ENCODE measurements at regions of chr6 and their contacts with region 1.

Region 1: GRCh38 chr6:22471132-22471690 is 98.2 kb upstream of the HDGFL1 start:
- DNase-seq: no peak
- ATAC-seq: peak; percentile 63
- H3K4me3 ChIP-seq: no peak overlapping the region
- H3K27ac ChIP-seq: peak overlapping the region; percentile 24
- H3K4me1 ChIP-seq: peaks cover 13% of the 10 kb centered on the region
- H3K27me3 ChIP-seq: no peaks in the 10 kb centered on the region
- CTCF ChIP-seq: no peak; a peak in 1 of 6 replicates
- EP300 ChIP-seq: no peak
- POLR2A ChIP-seq: no peak
- RAD21 ChIP-seq: peak; percentile 19; the same call in 1 of the 2 replicates

Region 2: DNA sequence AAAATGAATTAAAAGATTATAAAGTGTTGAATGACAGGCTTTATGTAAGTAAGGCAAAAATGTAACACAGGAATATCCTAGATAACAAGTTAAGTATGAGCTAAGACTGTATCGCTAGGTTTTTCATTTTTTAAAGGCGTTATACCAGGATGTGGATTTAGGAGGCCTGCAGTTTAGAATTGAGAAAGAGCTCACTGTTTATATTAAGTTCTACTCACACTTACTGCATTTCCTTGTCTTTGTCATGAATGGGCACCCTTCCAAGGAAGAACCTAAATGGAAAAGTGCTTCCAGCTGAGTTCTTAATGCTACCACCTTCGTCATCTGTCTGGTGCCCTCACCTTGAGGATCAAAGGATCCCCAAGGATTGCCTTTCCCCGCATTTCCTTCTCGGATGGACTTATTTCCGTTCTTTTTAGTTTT is 729.0 kb before region 1 on chr6:
- CTCF ChIA-PET with region 1: no interaction called
- POLR2A ChIA-PET with region 1: no interaction called
- RAD21 ChIA-PET with region 1: no interaction called
- SMC1A ChIA-PET with region 1: no interaction called
- in situ Hi-C with region 1: no loop called
- intact Hi-C with region 1: no loop called
- DNase-seq: no peak
- ATAC-seq: no peak
- H3K4me3 ChIP-seq: no peak overlapping the region
- H3K27ac ChIP-seq: no peak overlapping the region
- H3K4me1 ChIP-seq: no peaks in the 10 kb centered on the region
- H3K27me3 ChIP-seq: no peaks in the 10 kb centered on the region
- CTCF ChIP-seq: no peak
- EP300 ChIP-seq: no peak
- POLR2A ChIP-seq: no peak
- RAD21 ChIP-seq: no peak

Region 3: GRCh38 chr6:22302838-22303237 is 168.4 kb before region 1 on chr6:
- CTCF ChIA-PET with region 1: no interaction called
- POLR2A ChIA-PET with region 1: no interaction called
- RAD21 ChIA-PET with region 1: no interaction called
- SMC1A ChIA-PET with region 1: no interaction called
- in situ Hi-C with region 1: no loop called
- intact Hi-C with region 1: no loop called
- DNase-seq: no peak
- ATAC-seq: peak; percentile 55
- H3K4me3 ChIP-seq: no peak overlapping the region
- H3K27ac ChIP-seq: no peak overlapping the region
- H3K4me1 ChIP-seq: no peaks in the 10 kb centered on the region
- H3K27me3 ChIP-seq: no peaks in the 10 kb centered on the region
- CTCF ChIP-seq: no peak
- EP300 ChIP-seq: no peak
- POLR2A ChIP-seq: no peak
- RAD21 ChIP-seq: no peak

Region 4: DNA sequence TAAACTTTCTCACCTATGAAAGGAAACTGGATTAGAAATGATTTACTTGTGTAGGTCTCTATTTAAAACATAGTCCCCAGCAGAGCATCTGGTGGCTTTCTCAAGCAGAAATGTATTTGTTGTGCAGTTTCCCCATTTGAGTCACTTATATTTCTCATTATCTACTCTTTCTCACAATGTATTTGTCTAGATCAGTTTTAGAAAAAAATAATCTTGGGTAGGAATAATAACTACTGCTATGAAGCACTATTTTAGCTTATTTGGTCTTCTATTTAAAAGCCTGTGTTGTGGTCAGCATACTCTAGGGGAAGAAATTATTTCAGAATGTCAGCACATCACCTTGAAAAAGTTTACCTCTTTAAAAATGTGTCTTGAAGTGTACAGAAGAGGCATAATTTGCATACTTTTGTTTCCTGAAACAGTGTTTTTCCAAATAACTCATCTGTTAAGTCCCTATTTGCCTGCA is 113.5 kb before region 1 on chr6:
- CTCF ChIA-PET with region 1: no interaction called
- POLR2A ChIA-PET with region 1: no interaction called
- RAD21 ChIA-PET with region 1: interaction called, 5 read pairs
- SMC1A ChIA-PET with region 1: interaction called, 3 read pairs
- in situ Hi-C with region 1: no loop called
- intact Hi-C with region 1: loop called (anchors 5 kb)
- DNase-seq: peak; percentile 67
- ATAC-seq: peak; percentile 88
- H3K4me3 ChIP-seq: no peak overlapping the region
- H3K27ac ChIP-seq: peak overlapping the region; percentile 82
- H3K4me1 ChIP-seq: peaks cover 25% of the 10 kb centered on the region
- H3K27me3 ChIP-seq: no peaks in the 10 kb centered on the region
- CTCF ChIP-seq: no peak
- EP300 ChIP-seq: peak; percentile 48 to 57; a peak in 2 of 4 replicates
- POLR2A ChIP-seq: no peak
- RAD21 ChIP-seq: no peak

Region 5: GRCh38 chr6:22432060-22432459 is 39.2 kb before region 1 on chr6:
- CTCF ChIA-PET with region 1: no interaction called
- POLR2A ChIA-PET with region 1: no interaction called
- RAD21 ChIA-PET with region 1: no interaction called
- SMC1A ChIA-PET with region 1: no interaction called
- in situ Hi-C with region 1: no loop called
- intact Hi-C with region 1: no loop called
- DNase-seq: no peak
- ATAC-seq: no peak
- H3K4me3 ChIP-seq: no peak overlapping the region
- H3K27ac ChIP-seq: no peak overlapping the region
- H3K4me1 ChIP-seq: no peaks in the 10 kb centered on the region
- H3K27me3 ChIP-seq: no peaks in the 10 kb centered on the region
- CTCF ChIP-seq: no peak
- EP300 ChIP-seq: no peak
- POLR2A ChIP-seq: no peak
- RAD21 ChIP-seq: no peak

Region 6: GRCh38 chr6:22457996-22458395 is 13.2 kb before region 1 on chr6:
- CTCF ChIA-PET with region 1: interaction called, 3 read pairs
- POLR2A ChIA-PET with region 1: no interaction called
- RAD21 ChIA-PET with region 1: no interaction called
- SMC1A ChIA-PET with region 1: interaction called, 10 read pairs
- in situ Hi-C with region 1: no loop called
- intact Hi-C with region 1: no loop called
- DNase-seq: no peak
- ATAC-seq: no peak
- H3K4me3 ChIP-seq: no peak overlapping the region
- H3K27ac ChIP-seq: no peak overlapping the region
- H3K4me1 ChIP-seq: no peaks in the 10 kb centered on the region
- H3K27me3 ChIP-seq: no peaks in the 10 kb centered on the region
- CTCF ChIP-seq: no peak
- EP300 ChIP-seq: no peak
- POLR2A ChIP-seq: no peak
- RAD21 ChIP-seq: no peak